ENCODE measurements at regions of chr2 and their contacts with region 1.

Region 1: GRCh38 chr2:27356382-27357181 is at the start of gene GTF3C2:
- DNase-seq: peak; percentile 82 to 97 (median 93)
- ATAC-seq: peak; percentile 76
- H3K4me3 ChIP-seq: peak within 1 kb of the TSS; percentile 94 to 95
- H3K4me3 Mint-ChIP-seq: peak within 1 kb of the TSS; percentile 98
- H3K27ac ChIP-seq: peak within 1 kb of the TSS; percentile 87 to 95
- H3K27ac Mint-ChIP-seq: peak within 1 kb of the TSS; percentile 99
- H3K4me1 ChIP-seq: peaks cover 35% of the 10 kb centered on the region
- H3K4me1 Mint-ChIP-seq: peaks cover 51% of the 10 kb centered on the region
- H3K27me3 ChIP-seq: no peaks in the 10 kb centered on the region
- H3K27me3 Mint-ChIP-seq: no peaks in the 10 kb centered on the region
- CTCF ChIP-seq: no peak
- total RNA-seq, gene GTF3C2: 52.2 to 56.2 TPM

Region 2: DNA sequence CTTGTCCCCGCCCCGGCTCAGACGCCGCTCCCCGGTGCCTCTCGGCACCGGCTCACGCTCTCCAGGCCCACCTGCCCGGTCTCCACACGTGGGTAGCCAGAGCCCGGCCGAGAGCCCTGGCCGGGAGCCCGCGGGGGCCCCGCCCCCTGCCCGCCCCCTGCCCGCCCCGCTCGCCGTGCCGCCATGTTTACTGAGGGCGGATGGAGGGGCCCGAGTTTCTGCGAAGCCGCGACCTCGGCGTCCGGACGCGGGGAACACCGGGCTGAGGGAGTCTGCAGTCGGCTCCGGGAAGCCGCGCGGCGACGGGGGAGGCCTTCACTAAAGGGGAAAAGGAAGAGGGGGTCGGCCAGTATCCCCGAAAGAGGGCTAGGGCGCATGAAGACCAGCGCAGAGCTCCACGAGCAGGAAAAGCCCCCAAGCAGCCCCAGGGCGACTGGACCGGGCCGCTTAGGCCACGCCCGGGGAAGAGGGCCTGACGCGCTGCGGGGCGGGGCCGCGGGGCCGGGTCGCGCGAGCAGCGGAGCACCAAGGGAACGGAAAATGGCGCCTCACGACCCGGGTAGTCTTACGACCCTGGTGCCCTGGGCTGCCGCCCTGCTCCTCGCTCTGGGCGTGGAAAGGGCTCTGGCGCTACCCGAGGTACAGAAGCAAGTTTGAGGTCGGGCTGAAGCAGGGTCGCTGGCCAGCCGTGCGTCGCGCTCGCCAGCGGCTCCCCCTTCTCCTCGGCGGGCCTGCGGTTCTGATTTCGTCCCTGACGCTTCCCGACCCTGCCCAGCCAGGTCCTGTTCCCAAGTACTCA is 144.6 kb before region 1 on chr2 and contains the starts of genes ATRAID and SLC5A6:
- CTCF ChIA-PET with region 1: no interaction called
- POLR2A ChIA-PET with region 1: no interaction called
- intact Hi-C with region 1: loop called (anchors 1 to 2 kb)
- DNase-seq: peak; percentile 78 to 94 (median 87)
- ATAC-seq: peak; percentile 84
- H3K4me3 ChIP-seq: peak within 1 kb of the TSS; percentile 67 to 99
- H3K4me3 Mint-ChIP-seq: peak within 1 kb of the TSS; percentile 100
- H3K27ac ChIP-seq: peak within 1 kb of the TSS; percentile 97 to 100
- H3K27ac Mint-ChIP-seq: peak within 1 kb of the TSS; percentile 100
- H3K4me1 ChIP-seq: peaks cover 26% of the 10 kb centered on the region
- H3K4me1 Mint-ChIP-seq: peaks cover 44% of the 10 kb centered on the region
- H3K27me3 ChIP-seq: no peaks in the 10 kb centered on the region
- H3K27me3 Mint-ChIP-seq: no peaks in the 10 kb centered on the region
- CTCF ChIP-seq: no peak
- total RNA-seq, gene ATRAID: 70.0 to 71.7 TPM
- total RNA-seq, gene SLC5A6: 410 to 431 TPM

Region 3: DNA sequence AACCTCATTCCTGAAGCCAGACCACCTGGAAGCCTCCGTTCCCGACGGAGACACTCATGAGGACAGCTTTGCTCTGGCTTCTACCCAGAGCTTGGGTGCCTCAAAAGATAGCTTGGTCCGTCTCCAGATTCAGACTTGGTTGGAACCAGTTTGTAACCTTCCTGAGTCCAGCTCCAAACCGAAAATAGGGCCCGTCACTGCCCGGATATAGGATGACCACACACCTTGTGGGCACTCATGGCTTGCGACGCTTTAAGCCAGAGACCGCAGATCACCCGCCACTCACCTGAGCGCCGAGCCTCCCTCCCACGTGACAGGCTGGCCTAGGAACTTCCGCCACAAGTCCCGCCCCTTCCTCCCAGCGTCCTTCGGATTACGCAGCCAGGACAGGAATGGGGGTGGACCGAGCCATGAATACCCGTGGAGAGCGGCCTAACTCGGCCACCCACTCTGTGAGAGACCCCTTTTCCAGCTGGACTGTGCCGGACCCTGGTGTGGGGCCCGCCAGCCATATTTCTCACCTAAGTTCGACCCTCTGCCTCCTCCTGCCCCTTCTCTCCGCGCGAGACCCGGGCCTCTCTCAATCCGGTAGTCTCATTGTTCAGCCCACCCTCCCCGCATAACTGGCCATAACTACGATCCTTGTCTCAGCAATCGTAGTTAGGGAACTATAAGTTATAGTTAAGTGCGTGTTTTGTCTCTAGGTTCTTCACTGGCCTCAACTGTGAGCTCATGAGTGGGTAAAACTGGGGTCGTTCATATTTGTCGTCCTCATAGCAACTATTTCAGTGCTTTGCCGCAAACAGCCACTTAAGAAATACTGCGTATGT is 33.6 kb before region 1 on chr2 and contains the start of gene MPV17:
- CTCF ChIA-PET with region 1: interaction called, 3 read pairs
- POLR2A ChIA-PET with region 1: interaction called, 13 read pairs
- intact Hi-C with region 1: loop called (anchors 1 kb)
- DNase-seq: peak; percentile 65 to 93 (median 87)
- ATAC-seq: peak; percentile 96
- H3K4me3 ChIP-seq: peak within 1 kb of the TSS; percentile 80 to 81
- H3K4me3 Mint-ChIP-seq: peak within 1 kb of the TSS; percentile 99
- H3K27ac ChIP-seq: peak within 1 kb of the TSS; percentile 89 to 94
- H3K27ac Mint-ChIP-seq: peak within 1 kb of the TSS; percentile 99
- H3K4me1 ChIP-seq: peaks cover 9% of the 10 kb centered on the region
- H3K4me1 Mint-ChIP-seq: peaks cover 25% of the 10 kb centered on the region
- H3K27me3 ChIP-seq: no peaks in the 10 kb centered on the region
- H3K27me3 Mint-ChIP-seq: no peaks in the 10 kb centered on the region
- CTCF ChIP-seq: no peak
- total RNA-seq, gene MPV17: 23.6 to 26.0 TPM

Region 4: DNA sequence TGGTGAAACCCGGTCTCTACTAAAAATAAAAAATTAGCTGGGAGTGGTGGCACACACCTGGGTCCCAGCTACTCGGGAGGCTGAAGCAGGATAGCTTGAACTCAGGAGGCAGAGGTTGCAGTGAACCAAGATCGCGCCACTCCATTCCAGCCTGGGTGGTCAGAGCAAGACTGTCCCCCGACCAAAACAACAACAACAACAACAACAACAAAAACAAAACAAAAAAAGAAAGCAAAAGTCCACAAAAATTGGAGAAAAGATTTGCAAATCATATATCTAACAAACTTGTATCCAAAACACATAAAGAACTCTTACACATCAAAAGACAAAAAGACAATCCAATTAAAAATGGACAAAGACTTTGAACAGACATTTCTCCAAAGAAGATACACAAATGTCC is 42.4 kb after region 1 on chr2:
- CTCF ChIA-PET with region 1: no interaction called
- POLR2A ChIA-PET with region 1: no interaction called
- intact Hi-C with region 1: no loop called
- DNase-seq: no peak
- ATAC-seq: no peak
- H3K4me3 ChIP-seq: no peak overlapping the region
- H3K4me3 Mint-ChIP-seq: no peak overlapping the region
- H3K27ac ChIP-seq: no peak overlapping the region
- H3K27ac Mint-ChIP-seq: no peak overlapping the region
- H3K4me1 ChIP-seq: peaks cover 5% of the 10 kb centered on the region
- H3K4me1 Mint-ChIP-seq: peaks cover 49% of the 10 kb centered on the region
- H3K27me3 ChIP-seq: no peaks in the 10 kb centered on the region
- H3K27me3 Mint-ChIP-seq: no peaks in the 10 kb centered on the region
- CTCF ChIP-seq: no peak

Region 5: GRCh38 chr2:27409321-27410073 is 52.9 kb after region 1 on chr2 and contains the start of gene PPM1G:
- CTCF ChIA-PET with region 1: no interaction called
- POLR2A ChIA-PET with region 1: interaction called, 12 read pairs
- intact Hi-C with region 1: loop called (anchors 1 kb)
- DNase-seq: peak; percentile 91 to 98 (median 97)
- ATAC-seq: peak; percentile 96
- H3K4me3 ChIP-seq: peak within 1 kb of the TSS; percentile 51 to 98
- H3K4me3 Mint-ChIP-seq: peak within 1 kb of the TSS; percentile 88
- H3K27ac ChIP-seq: peak within 1 kb of the TSS; percentile 84 to 90
- H3K27ac Mint-ChIP-seq: peak within 1 kb of the TSS; percentile 97
- H3K4me1 ChIP-seq: peaks cover 21% of the 10 kb centered on the region
- H3K4me1 Mint-ChIP-seq: peaks cover 39% of the 10 kb centered on the region
- H3K27me3 ChIP-seq: no peaks in the 10 kb centered on the region
- H3K27me3 Mint-ChIP-seq: no peaks in the 10 kb centered on the region
- CTCF ChIP-seq: no peak
- total RNA-seq, gene PPM1G: 36.4 to 38.5 TPM

Region 6: GRCh38 chr2:27628767-27629709 is 272.5 kb after region 1 on chr2 and contains the starts of genes CCDC121 and GPN1:
- CTCF ChIA-PET with region 1: no interaction called
- POLR2A ChIA-PET with region 1: no interaction called
- intact Hi-C with region 1: loop called in 1 of 2 experiments (anchors 2 kb)
- DNase-seq: peak; percentile 88 to 97 (median 95)
- ATAC-seq: peak; percentile 98
- H3K4me3 ChIP-seq: peak within 1 kb of the TSS; percentile 94 to 98
- H3K4me3 Mint-ChIP-seq: no peak within 1 kb of the TSS
- H3K27ac ChIP-seq: peak within 1 kb of the TSS; percentile 84 to 91
- H3K27ac Mint-ChIP-seq: peak within 1 kb of the TSS; percentile 46
- H3K4me1 ChIP-seq: peaks cover 18% of the 10 kb centered on the region
- H3K4me1 Mint-ChIP-seq: peaks cover 20% of the 10 kb centered on the region
- H3K27me3 ChIP-seq: no peaks in the 10 kb centered on the region
- H3K27me3 Mint-ChIP-seq: no peaks in the 10 kb centered on the region
- CTCF ChIP-seq: no peak
- total RNA-seq, gene CCDC121: 0.92 to 1.4 TPM
- total RNA-seq, gene GPN1: 40.6 to 41.7 TPM